ENCODE measurements at regions of chr17 and their contacts with region 1.

Region 1: GRCh38 chr17:40019140-40019991 is 4.1 kb downstream of the CSF3 start:
- DNase-seq: no peak
- H3K4me3 ChIP-seq: no peak overlapping the region
- H3K27ac ChIP-seq: no peak overlapping the region
- H3K4me1 ChIP-seq: peaks cover 6% of the 10 kb centered on the region
- H3K27me3 ChIP-seq: no peaks in the 10 kb centered on the region
- CTCF ChIP-seq: no peak
- POLR2A ChIP-seq: no peak

Region 2: DNA sequence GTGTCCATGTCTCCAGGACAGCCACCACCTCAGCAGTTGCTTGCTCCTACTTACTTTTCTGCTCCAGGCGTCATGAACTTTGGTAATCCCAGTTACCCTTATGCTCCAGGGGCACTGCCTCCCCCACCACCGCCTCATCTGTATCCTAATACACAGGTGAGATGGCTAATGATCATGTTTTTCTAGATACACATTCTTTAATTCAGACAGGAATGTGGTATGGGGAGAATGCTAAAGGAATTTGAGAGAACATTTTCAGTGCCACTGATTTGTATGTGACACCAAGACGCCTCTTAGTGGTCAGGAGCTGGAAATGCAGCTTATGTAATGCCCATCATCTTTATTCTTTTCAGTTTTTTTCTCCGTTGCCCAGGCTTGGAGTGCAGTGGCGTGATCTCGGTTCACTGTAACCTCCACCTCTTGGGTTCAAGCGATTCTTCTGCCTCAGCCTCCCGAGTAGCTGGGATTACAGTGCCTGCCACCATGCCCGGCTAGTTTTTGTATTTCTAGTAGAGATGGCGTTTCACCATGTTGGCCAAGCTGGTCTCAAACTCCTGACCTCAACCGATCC is 149.0 kb after region 1 on chr17:
- intact Hi-C with region 1: loop called (anchors 5 kb)
- DNase-seq: peak; percentile 36
- H3K4me3 ChIP-seq: no peak overlapping the region
- H3K27ac ChIP-seq: peak overlapping the region; percentile 42 to 56
- H3K4me1 ChIP-seq: no peaks in the 10 kb centered on the region
- H3K27me3 ChIP-seq: no peaks in the 10 kb centered on the region
- CTCF ChIP-seq: peak; percentile 43 to 95 (median 86)
- POLR2A ChIP-seq: no peak

Region 3: DNA sequence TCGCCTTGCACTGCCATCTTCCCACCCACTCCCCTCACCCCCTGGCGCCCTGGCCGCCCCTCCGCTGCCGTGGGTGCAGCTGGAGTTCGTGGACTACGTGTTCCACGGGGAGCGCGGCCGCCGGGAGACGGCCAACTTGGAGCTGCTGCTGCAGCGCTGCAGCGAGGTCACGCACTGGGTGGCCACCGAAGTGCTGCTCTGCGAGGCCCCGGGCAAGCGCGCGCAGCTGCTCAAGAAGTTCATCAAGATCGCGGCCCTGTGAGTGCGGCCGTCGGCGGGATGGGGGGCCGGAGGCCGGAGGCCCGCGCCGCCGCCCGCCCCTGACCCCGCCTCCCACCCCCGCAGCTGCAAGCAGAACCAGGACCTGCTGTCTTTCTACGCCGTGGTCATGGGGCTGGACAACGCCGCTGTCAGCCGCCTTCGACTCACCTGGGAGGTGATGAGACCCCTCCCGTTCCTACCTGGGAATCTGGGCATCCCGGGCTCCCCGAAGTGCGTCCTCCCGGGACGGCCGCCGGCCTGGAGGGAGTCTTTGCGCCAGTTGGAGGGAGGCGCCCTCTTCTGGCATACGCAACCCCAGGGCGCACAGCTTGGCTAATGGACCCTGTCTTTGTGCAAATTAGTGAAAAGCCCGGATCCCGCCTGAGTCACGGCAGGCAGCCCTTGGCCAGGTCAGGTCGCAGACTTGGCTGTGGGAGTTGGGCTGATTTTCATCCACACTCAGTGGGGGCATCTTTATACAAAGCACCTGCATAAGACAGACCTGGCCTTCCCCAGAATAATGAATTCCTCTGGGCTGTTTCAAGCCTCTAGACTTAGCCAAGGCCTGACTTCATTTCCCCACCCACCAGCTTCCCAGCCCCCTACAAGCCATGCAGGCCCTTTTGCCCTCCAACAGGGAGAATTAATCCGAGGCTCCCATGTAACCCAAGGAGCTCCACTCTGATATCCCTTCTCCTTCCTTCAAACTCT is 172.2 kb after region 1 on chr17:
- intact Hi-C with region 1: loop called (anchors 5 kb)
- DNase-seq: peak; percentile 75
- H3K4me3 ChIP-seq: peak overlapping the region; percentile 38 to 41
- H3K27ac ChIP-seq: peak overlapping the region; percentile 61 to 62
- H3K4me1 ChIP-seq: no peaks in the 10 kb centered on the region
- H3K27me3 ChIP-seq: no peaks in the 10 kb centered on the region
- CTCF ChIP-seq: peak; percentile 23 to 79 (median 70)
- POLR2A ChIP-seq: no peak

Region 4: DNA sequence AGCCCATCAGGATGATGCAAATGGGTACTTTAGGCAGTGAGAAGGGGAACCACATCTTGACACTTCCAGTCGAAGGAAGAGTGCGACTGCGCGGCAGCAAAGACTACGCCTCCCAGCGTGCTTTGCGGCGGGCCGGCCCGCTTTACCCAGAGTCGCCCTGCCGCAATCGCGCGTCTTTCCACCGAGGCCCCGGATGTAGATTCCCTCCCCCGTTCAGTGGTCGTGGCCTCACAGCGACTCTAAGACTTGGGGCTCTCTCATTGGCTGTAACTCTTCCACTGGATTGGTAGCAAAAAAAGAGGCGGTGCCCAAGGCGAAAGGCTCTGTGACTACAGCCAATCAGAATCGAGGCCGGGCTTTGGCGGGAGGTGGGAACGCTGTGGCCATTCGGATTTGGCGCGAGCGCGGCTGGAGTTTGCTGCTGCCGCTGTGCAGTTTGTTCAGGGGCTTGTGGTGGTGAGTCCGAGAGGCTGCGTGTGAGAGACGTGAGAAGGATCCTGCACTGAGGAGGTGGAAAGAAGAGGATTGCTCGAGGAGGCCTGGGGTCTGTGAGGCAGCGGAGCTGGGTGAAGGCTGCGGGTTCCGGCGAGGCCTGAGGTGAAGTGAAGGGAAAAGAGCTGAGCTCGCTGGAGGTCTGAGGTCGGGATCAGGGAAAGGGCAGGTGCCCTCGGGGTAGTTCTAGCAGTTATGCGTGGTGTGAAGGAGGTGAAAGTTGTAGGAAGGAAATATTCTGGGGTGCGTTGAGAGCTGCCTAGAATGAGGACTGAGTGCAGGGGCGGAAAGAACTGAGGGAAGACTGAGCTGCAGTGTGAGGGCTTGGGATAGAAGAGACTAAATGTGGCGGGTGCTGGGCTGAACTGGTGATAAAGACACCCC is 268.4 kb after region 1 on chr17 and contains the start of gene CDC6:
- intact Hi-C with region 1: loop called (anchors 10 kb)
- DNase-seq: peak; percentile 99
- H3K4me3 ChIP-seq: peak within 1 kb of the TSS; percentile 35 to 45
- H3K27ac ChIP-seq: peak within 1 kb of the TSS in 1 of 2 donors; percentile 5
- H3K4me1 ChIP-seq: peaks cover 4% of the 10 kb centered on the region
- H3K27me3 ChIP-seq: no peaks in the 10 kb centered on the region
- CTCF ChIP-seq: no peak
- POLR2A ChIP-seq: no peak
- total RNA-seq, gene CDC6: 2.1 to 10.3 TPM

Measured in prostate gland (tissue), 2 donors.